ENCODE measurements at regions of chr11 and their contacts with region 1.

Region 1: DNA sequence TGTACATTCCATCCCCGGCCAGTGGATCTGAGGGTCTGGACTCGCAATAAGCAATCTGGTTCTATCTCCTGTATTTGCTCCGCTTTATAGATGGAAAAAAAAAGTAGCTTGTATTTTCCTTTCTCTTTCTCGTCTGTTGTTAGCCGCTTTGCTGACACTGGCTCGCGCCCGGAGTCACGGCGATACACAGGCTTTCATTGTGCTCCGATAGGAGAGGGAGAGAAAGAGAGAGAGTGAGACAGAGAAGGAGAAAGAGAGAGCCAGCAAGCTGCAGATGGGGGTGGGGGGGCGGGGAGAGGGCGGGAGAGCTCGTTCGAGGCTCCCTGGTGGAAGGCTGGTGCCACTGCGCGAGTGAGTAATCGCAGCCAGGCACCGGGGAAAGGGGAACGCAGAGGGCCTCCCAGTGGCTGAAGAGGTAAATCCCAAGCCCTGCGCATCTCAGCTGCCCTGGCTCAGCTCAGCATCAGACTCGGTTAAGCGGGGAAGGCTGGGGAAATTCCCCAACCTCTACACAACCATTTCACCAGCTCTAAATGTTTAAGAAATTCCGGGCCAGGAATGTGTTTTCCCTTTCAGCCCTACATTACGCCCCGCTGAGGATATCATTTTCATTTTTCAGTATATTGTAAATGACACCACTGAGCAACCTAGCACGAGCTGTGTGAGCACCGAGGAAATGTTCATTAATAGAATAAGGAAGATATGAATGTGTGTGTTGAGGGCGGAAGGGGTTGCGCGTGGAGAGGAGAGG is at the start of gene MAML2:
- DNase-seq: peak; percentile 93
- H3K4me3 Mint-ChIP-seq: peak within 1 kb of the TSS; percentile 94
- H3K27ac Mint-ChIP-seq: peak within 1 kb of the TSS; percentile 91
- H3K4me1 Mint-ChIP-seq: peaks cover 30% of the 10 kb centered on the region
- H3K27me3 Mint-ChIP-seq: no peaks in the 10 kb centered on the region

Region 2: DNA sequence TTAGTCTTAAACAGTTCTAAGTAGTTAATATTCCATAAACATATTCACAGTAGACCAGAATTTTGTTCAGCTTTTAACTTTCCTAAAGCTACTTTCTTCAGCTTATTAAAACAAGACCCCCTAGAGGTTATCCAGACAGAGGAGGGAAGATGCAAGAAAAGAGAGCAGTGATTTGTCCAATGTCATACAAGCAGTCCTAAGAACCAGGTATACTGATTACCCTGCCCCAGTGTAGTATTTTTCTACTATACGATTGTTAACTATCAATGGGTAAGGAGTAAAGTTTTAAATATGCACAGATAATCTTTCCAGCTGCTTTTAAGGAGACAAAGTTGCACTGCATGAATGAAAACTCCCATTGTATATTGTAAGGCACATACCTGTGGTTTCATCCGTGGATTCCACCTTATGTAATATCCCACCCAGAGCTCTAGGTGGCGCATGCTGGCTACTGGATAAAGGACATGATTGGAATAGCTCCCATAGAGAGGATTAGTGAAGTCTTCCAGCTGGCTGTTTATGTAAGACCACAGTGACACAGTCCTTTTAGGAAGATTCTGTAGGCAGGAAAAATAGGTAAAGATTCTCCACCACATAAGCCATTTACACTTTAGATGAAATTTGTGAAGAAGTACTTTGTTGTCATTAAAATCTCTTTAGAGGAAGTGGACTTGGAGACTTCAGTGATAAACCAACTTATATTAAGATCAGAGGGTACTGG is 507.2 kb before region 1 on chr11:
- CTCF ChIA-PET with region 1: interaction called, 20 read pairs
- DNase-seq: peak; percentile 68
- H3K4me3 Mint-ChIP-seq: no peak overlapping the region
- H3K27ac Mint-ChIP-seq: no peak overlapping the region
- H3K4me1 Mint-ChIP-seq: no peaks in the 10 kb centered on the region
- H3K27me3 Mint-ChIP-seq: no peaks in the 10 kb centered on the region

Region 3: GRCh38 chr11:95922536-95923438 is 420.3 kb before region 1 on chr11:
- CTCF ChIA-PET with region 1: no interaction called
- DNase-seq: no peak
- H3K4me3 Mint-ChIP-seq: peak overlapping the region; percentile 79
- H3K27ac Mint-ChIP-seq: peak overlapping the region; percentile 29
- H3K4me1 Mint-ChIP-seq: peaks cover 24% of the 10 kb centered on the region
- H3K27me3 Mint-ChIP-seq: peaks cover 11% of the 10 kb centered on the region

Region 4: GRCh38 chr11:96054870-96055705 is 288.0 kb before region 1 on chr11:
- CTCF ChIA-PET with region 1: interaction called, 114 read pairs
- DNase-seq: no peak
- H3K4me3 Mint-ChIP-seq: no peak overlapping the region
- H3K27ac Mint-ChIP-seq: no peak overlapping the region
- H3K4me1 Mint-ChIP-seq: peaks cover 32% of the 10 kb centered on the region
- H3K27me3 Mint-ChIP-seq: no peaks in the 10 kb centered on the region

Region 5: DNA sequence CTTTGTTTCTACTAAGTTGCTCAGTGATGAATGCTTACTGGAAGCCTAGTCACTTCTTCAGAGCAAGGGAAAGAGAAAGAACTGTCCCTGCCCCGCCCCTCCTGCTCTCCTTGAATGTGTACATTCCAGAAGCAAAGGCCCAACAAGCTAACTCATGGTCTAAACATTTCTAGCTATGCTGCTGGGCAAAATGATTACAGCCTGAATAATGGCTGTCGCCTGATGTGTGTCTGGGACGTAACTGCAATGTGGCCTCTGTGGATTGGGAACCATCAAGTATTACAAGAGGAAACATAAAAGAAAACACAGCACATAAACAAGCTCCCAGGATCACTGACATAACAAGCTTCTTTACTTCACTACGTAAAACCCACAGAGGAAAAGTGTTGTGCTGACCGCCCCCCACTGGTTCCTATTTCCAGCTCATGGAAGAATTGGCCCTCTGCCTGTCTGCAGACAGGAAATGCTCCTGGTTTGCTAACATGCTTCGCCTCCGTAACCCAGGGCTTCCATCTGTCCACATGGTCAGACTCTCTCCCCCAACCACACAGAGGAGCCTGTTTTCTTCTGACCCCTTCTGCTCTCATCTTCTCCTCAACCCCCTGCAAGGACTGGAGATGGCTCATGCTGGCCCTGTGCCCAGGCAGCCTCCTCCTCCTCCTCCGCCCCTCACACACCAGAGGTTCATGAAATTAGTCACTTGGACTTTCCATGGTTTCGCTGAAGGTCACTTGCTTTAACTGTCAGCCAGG is 187.3 kb before region 1 on chr11:
- CTCF ChIA-PET with region 1: interaction called, 11 read pairs
- DNase-seq: peak; percentile 23
- H3K4me3 Mint-ChIP-seq: peak overlapping the region; percentile 13
- H3K27ac Mint-ChIP-seq: peak overlapping the region; percentile 92
- H3K4me1 Mint-ChIP-seq: peaks cover 53% of the 10 kb centered on the region
- H3K27me3 Mint-ChIP-seq: no peaks in the 10 kb centered on the region

Region 6: GRCh38 chr11:96256215-96257011 is 86.7 kb before region 1 on chr11:
- CTCF ChIA-PET with region 1: interaction called, 16 read pairs
- DNase-seq: no peak
- H3K4me3 Mint-ChIP-seq: peak overlapping the region; percentile 34
- H3K27ac Mint-ChIP-seq: peak overlapping the region; percentile 96
- H3K4me1 Mint-ChIP-seq: peaks cover 94% of the 10 kb centered on the region
- H3K27me3 Mint-ChIP-seq: no peaks in the 10 kb centered on the region

Region 7: DNA sequence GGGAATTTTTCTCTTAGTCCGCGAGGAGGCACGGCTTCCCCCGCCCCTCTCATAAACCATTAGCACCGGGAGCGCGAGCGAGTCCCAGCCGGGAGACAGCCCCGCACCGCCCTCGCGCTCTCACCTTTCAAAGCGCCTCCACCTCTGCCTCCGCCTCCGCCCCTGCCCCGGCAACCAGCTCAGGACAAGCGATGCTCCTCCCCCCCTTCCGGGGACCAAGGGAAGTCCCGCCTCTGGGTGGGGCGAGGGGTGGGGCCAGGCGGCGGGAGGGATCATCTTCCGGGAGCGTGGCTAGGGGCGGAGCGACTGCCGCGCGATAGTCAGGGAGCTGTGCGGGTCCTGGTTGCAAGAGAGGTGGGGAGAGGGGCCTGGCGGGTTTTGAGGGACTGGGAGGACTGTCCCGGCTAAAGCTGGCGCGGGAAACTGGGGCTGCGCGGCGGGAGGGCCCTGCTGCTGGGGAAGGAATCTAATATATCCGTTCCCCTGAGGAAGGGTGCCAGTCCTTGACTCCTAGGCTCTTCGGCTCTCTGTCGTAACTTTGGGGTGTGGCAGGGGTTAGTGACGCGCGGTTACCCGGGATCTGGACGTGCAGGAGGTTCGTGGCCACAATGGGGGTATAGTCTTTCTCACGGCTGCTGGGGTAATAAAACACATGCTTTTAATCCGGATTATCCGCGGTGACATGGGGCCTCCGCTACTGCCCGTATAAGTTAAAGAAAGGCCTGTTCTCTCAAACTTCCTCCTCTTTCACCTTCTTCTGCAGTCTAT is 46.8 kb after region 1 on chr11 and contains the starts of genes CCDC82 and JRKL:
- CTCF ChIA-PET with region 1: interaction called, 11 read pairs
- DNase-seq: peak; percentile 99
- H3K4me3 Mint-ChIP-seq: peak within 1 kb of the TSS; percentile 86
- H3K27ac Mint-ChIP-seq: peak within 1 kb of the TSS; percentile 93
- H3K4me1 Mint-ChIP-seq: peaks cover 59% of the 10 kb centered on the region
- H3K27me3 Mint-ChIP-seq: no peaks in the 10 kb centered on the region

Region 8: DNA sequence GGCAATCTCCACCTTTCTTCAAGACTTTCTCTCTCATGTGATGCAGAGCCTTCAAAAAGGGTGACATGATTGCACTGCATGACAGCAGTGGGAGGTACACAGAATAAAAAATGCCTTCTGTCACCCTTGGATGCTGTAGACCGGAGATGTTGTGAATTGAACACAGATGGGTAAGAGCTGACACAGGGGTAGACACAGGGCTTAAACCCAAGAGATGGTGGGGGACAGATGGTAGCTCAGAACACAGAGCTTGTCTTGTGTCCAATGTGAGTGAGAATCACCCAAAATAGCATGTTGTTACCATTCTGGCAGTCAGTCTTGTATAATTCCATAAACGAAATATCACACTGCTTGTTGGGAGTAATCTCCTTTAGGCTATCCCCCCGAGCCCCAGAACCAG is 116.6 kb after region 1 on chr11:
- CTCF ChIA-PET with region 1: no interaction called
- DNase-seq: no peak
- H3K4me3 Mint-ChIP-seq: no peak overlapping the region
- H3K27ac Mint-ChIP-seq: no peak overlapping the region
- H3K4me1 Mint-ChIP-seq: peaks cover 6% of the 10 kb centered on the region
- H3K27me3 Mint-ChIP-seq: peaks cover 14% of the 10 kb centered on the region